Prostate gland (tissue), 2 donors: ENCODE measurements at regions of chr2 and their contacts with region 1.

Region 1: GRCh38 chr2:234550511-234551107 is 53.7 kb upstream of the ARL4C start:
- DNase-seq: peak; percentile 64
- H3K4me3 ChIP-seq: no peak overlapping the region
- H3K27ac ChIP-seq: no peak overlapping the region
- H3K4me1 ChIP-seq: no peaks in the 10 kb centered on the region
- H3K27me3 ChIP-seq: no peaks in the 10 kb centered on the region
- CTCF ChIP-seq: peak; percentile 73 to 96 (median 92)
- POLR2A ChIP-seq: no peak

Region 2: GRCh38 chr2:234377761-234378391 is 172.7 kb before region 1 on chr2:
- intact Hi-C with region 1: no loop called
- DNase-seq: no peak
- H3K4me3 ChIP-seq: no peak overlapping the region
- H3K27ac ChIP-seq: no peak overlapping the region
- H3K4me1 ChIP-seq: peaks cover 2% of the 10 kb centered on the region
- H3K27me3 ChIP-seq: no peaks in the 10 kb centered on the region
- CTCF ChIP-seq: no peak
- POLR2A ChIP-seq: no peak

Region 3: DNA sequence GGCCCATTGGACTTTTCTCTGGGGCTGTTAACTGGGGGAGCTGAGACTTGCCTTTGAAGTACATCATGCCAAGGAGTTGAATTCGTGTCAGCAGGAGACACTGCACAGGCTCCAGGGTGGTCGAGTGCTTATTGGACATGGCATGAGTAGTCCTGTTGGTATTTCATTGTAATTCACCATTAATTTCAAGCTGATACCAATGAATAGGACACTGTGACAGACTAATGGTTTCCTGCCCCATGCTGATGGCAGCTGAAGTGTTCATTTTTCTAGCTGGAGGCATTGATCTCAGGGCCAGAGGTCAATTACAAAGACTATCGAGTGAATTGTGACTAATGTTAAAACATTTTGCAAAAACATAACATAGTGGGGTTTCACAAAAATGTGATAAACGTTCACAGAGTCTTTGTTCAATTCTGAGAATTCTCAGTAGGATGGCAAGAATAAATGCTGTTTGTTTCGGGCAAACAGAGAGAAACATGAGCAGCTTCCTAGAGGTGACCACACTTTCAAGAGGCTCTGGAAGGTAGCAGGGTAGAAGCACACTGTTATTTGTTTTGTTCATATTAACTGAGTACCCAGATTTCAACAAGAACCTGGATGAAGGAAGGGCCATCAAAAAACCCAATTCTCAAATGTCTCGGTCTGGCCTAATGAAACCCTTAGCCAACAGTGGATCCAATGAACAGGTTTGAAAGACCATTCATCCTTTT is 36.9 kb after region 1 on chr2:
- intact Hi-C with region 1: no loop called
- DNase-seq: no peak
- H3K4me3 ChIP-seq: no peak overlapping the region
- H3K27ac ChIP-seq: no peak overlapping the region
- H3K4me1 ChIP-seq: no peaks in the 10 kb centered on the region
- H3K27me3 ChIP-seq: no peaks in the 10 kb centered on the region
- CTCF ChIP-seq: no peak
- POLR2A ChIP-seq: no peak

Region 4: GRCh38 chr2:234650911-234651310 is 100.3 kb after region 1 on chr2:
- intact Hi-C with region 1: no loop called
- DNase-seq: no peak
- H3K4me3 ChIP-seq: no peak overlapping the region
- H3K27ac ChIP-seq: no peak overlapping the region
- H3K4me1 ChIP-seq: no peaks in the 10 kb centered on the region
- H3K27me3 ChIP-seq: no peaks in the 10 kb centered on the region
- CTCF ChIP-seq: no peak
- POLR2A ChIP-seq: no peak

Region 5: DNA sequence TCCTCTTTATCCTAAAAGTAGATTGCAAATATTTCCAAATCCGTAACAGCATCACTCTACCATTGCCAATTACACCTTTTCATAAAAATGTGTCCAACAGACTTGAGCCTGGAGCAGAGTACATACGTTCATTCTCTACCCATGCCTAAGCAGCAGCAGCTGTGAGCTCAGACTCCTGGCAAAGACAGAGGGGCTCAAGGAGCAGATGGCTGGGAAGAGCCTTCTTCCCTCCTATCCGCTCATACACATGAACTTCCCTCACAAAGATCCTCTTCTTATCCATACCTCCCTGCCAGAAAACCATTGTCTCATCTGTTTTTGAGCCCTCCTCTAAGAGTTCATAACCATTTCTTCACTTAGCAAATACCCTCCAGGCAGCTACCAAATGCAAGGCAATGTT is 110.6 kb after region 1 on chr2:
- intact Hi-C with region 1: no loop called
- DNase-seq: no peak
- H3K4me3 ChIP-seq: no peak overlapping the region
- H3K27ac ChIP-seq: no peak overlapping the region
- H3K4me1 ChIP-seq: no peaks in the 10 kb centered on the region
- H3K27me3 ChIP-seq: no peaks in the 10 kb centered on the region
- CTCF ChIP-seq: no peak
- POLR2A ChIP-seq: no peak

Region 6: GRCh38 chr2:235116885-235117492 is 566.4 kb after region 1 on chr2:
- intact Hi-C with region 1: loop called (anchors 2 kb)
- DNase-seq: no peak
- H3K4me3 ChIP-seq: no peak overlapping the region
- H3K27ac ChIP-seq: no peak overlapping the region
- H3K4me1 ChIP-seq: no peaks in the 10 kb centered on the region
- H3K27me3 ChIP-seq: no peaks in the 10 kb centered on the region
- CTCF ChIP-seq: peak; percentile 41 to 85 (median 72)
- POLR2A ChIP-seq: no peak